ENCODE measurements at regions of chr15 and their contacts with region 1.

Region 1: GRCh38 chr15:75639709-75640482 is at the start of gene IMP3:
- DNase-seq: peak; percentile 95 to 96
- H3K4me3 ChIP-seq: peak within 1 kb of the TSS; percentile 58 to 86
- H3K27ac ChIP-seq: peak within 1 kb of the TSS; percentile 88
- H3K4me1 ChIP-seq: peaks cover 3 to 11% of the 10 kb centered on the region in 2 donors
- H3K27me3 ChIP-seq: no peaks in the 10 kb centered on the region
- CTCF ChIP-seq: peak in 2 of 4 experiments; percentile 5 to 11
- POLR2A ChIP-seq: peak; percentile 96 to 97
- total RNA-seq, gene IMP3: 32.9 to 171 (median 68.5) TPM

Region 2: DNA sequence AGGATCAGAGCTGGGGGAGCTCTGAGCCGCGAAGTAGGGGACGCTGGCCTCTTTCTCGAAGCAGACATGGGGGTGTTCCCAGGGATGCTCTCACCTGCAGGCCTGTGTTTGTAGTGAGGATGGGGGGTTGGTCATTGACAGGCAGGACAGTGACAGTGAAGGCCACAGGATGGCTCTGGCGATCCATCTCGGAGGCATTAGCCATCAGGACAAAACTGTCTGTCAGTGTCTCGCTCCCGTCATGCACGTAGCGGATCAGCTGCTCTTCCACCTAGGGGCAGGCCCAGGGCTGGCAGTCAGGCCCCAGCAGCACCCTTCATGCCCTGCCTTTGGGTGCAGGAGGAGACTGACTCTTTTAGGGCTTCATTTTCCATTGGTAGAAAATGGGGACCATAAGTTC is 44.7 kb after region 1 on chr15:
- intact Hi-C with region 1: loop called (anchors 5 kb)
- DNase-seq: no peak
- H3K4me3 ChIP-seq: no peak overlapping the region
- H3K27ac ChIP-seq: no peak overlapping the region
- H3K4me1 ChIP-seq: no peaks in the 10 kb centered on the region
- H3K27me3 ChIP-seq: no peaks in the 10 kb centered on the region
- CTCF ChIP-seq: no peak
- POLR2A ChIP-seq: no peak

Region 3: GRCh38 chr15:75785771-75786574 is 146.1 kb after region 1 on chr15:
- intact Hi-C with region 1: no loop called
- DNase-seq: no peak
- H3K4me3 ChIP-seq: no peak overlapping the region
- H3K27ac ChIP-seq: no peak overlapping the region
- H3K4me1 ChIP-seq: no peaks in the 10 kb centered on the region
- H3K27me3 ChIP-seq: no peaks in the 10 kb centered on the region
- CTCF ChIP-seq: no peak
- POLR2A ChIP-seq: no peak

Region 4: GRCh38 chr15:76223521-76223920 is 583.6 kb after region 1 on chr15:
- intact Hi-C with region 1: no loop called
- DNase-seq: no peak
- H3K4me3 ChIP-seq: no peak overlapping the region
- H3K27ac ChIP-seq: no peak overlapping the region
- H3K4me1 ChIP-seq: no peaks in the 10 kb centered on the region
- H3K27me3 ChIP-seq: no peaks in the 10 kb centered on the region
- CTCF ChIP-seq: no peak
- POLR2A ChIP-seq: no peak

Measured in uterus (tissue), 4 donors.